Ovary (tissue), 10 donors: ENCODE measurements at regions of chr15 and their contacts with region 1.

Region 1: GRCh38 chr15:33547876-33548275 is 237.1 kb downstream of the RYR3 start:
- DNase-seq: peak; percentile 15 to 61 (median 34)
- H3K4me3 ChIP-seq: no peak overlapping the region
- H3K27ac ChIP-seq: no peak overlapping the region
- H3K4me1 ChIP-seq: no peaks in the 10 kb centered on the region
- H3K27me3 ChIP-seq: no peaks in the 10 kb centered on the region
- CTCF ChIP-seq: no peak
- EP300 ChIP-seq: no peak
- POLR2A ChIP-seq: no peak

Region 2: DNA sequence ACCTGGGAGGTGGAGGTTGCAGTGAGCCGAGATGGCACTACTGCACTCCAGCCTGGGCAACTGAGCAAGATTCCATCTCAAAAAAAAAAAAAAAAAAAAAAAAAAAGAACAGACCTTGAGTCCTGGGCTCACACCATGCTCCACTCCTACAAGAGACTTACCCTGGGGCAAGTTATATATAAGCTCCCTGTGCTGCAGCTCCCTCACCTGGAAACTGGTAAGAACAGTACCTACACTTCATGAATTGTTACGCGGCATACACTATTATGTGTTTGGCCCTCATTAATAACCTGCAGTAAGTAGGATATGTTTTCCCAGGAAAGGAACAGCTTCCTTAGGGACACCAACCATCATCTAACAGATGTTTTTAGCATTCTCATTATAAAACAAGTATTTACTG is 472.9 kb before region 1 on chr15:
- intact Hi-C with region 1: no loop called
- DNase-seq: no peak
- H3K4me3 ChIP-seq: no peak overlapping the region
- H3K27ac ChIP-seq: no peak overlapping the region
- H3K4me1 ChIP-seq: no peaks in the 10 kb centered on the region
- H3K27me3 ChIP-seq: no peaks in the 10 kb centered on the region
- CTCF ChIP-seq: no peak
- EP300 ChIP-seq: no peak
- POLR2A ChIP-seq: no peak

Region 3: GRCh38 chr15:33608714-33609113 is 60.8 kb after region 1 on chr15:
- intact Hi-C with region 1: loop called in 1 of 4 experiments (anchors 10 kb)
- DNase-seq: no peak
- H3K4me3 ChIP-seq: no peak overlapping the region
- H3K27ac ChIP-seq: no peak overlapping the region
- H3K4me1 ChIP-seq: no peaks in the 10 kb centered on the region
- H3K27me3 ChIP-seq: no peaks in the 10 kb centered on the region
- CTCF ChIP-seq: no peak
- EP300 ChIP-seq: no peak
- POLR2A ChIP-seq: no peak